Activated CD8-positive, alpha-beta memory T cell treated with anti-CD3 and anti-CD28 coated beads, Interleukin-2, amount 10 ng/mL, durations not matched to agents 7 days and 5 days (primary cell): ENCODE measurements at regions of chr14 and their contacts with region 1.

Region 1: GRCh38 chr14:77314043-77314442 is 6.6 kb downstream of the POMT2 start:
- DNase-seq: no peak
- ATAC-seq: no peak
- H3K4me3 Mint-ChIP-seq: no peak overlapping the region
- H3K27ac Mint-ChIP-seq: no peak overlapping the region
- H3K4me1 Mint-ChIP-seq: peaks cover 4% of the 10 kb centered on the region
- H3K27me3 Mint-ChIP-seq: no peaks in the 10 kb centered on the region

Region 2: GRCh38 chr14:77151918-77152588 is 162.0 kb before region 1 on chr14:
- CTCF ChIA-PET with region 1: interaction called, 72 read pairs
- DNase-seq: no peak
- ATAC-seq: peak; percentile 61
- H3K4me3 Mint-ChIP-seq: no peak overlapping the region
- H3K27ac Mint-ChIP-seq: no peak overlapping the region
- H3K4me1 Mint-ChIP-seq: no peaks in the 10 kb centered on the region
- H3K27me3 Mint-ChIP-seq: peaks cover 31% of the 10 kb centered on the region

Region 3: GRCh38 chr14:77301103-77301502 is 12.9 kb before region 1 on chr14:
- CTCF ChIA-PET with region 1: interaction called, 170 read pairs
- DNase-seq: peak; percentile 78
- ATAC-seq: no peak
- H3K4me3 Mint-ChIP-seq: no peak overlapping the region
- H3K27ac Mint-ChIP-seq: no peak overlapping the region
- H3K4me1 Mint-ChIP-seq: peaks cover 22% of the 10 kb centered on the region
- H3K27me3 Mint-ChIP-seq: peaks cover 3% of the 10 kb centered on the region

Region 4: DNA sequence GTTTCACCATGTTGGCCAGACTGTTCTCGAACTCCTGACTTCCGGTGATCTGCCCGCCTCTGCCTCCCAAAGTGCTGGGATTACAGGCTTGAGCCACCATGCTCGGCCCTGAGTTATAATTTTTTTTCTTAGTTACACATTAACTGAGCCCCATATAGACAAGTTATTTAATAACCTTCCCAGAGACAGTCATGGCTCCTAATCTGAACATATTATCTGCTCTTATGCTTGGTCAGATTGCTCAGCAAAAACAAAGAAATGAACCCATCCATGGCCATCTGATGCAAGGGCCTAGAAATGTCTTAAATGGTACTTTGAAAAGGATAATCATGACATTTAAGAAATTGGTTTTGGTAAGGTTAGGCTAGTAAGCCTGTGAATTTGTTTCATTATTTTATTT is 76.1 kb after region 1 on chr14:
- CTCF ChIA-PET with region 1: no interaction called
- DNase-seq: no peak
- ATAC-seq: no peak
- H3K4me3 Mint-ChIP-seq: no peak overlapping the region
- H3K27ac Mint-ChIP-seq: no peak overlapping the region
- H3K4me1 Mint-ChIP-seq: no peaks in the 10 kb centered on the region
- H3K27me3 Mint-ChIP-seq: no peaks in the 10 kb centered on the region

Region 5: DNA sequence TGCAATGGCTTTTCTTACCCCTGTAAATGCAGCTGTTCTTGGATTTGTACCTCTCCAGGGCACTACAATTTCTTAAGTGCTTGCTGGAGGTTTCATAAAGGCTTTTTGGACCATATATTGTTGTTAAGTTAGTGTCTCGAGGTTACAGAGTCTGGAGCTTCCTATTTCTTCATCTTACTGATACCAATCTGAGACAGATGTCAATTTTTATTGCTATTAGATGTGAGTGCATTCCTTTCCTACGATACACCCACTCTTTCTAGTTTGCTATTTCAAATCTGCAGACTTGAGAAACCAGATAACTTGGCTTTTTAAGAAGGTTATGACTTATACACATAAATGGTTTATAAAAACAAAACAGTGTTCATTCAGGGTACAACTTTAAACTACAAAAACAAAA is 107.2 kb after region 1 on chr14:
- CTCF ChIA-PET with region 1: no interaction called
- DNase-seq: no peak
- ATAC-seq: no peak
- H3K4me3 Mint-ChIP-seq: no peak overlapping the region
- H3K27ac Mint-ChIP-seq: no peak overlapping the region
- H3K4me1 Mint-ChIP-seq: no peaks in the 10 kb centered on the region
- H3K27me3 Mint-ChIP-seq: no peaks in the 10 kb centered on the region